PC-9 (cell line): ENCODE measurements at regions of chr7 and their contacts with region 1.

Region 1: DNA sequence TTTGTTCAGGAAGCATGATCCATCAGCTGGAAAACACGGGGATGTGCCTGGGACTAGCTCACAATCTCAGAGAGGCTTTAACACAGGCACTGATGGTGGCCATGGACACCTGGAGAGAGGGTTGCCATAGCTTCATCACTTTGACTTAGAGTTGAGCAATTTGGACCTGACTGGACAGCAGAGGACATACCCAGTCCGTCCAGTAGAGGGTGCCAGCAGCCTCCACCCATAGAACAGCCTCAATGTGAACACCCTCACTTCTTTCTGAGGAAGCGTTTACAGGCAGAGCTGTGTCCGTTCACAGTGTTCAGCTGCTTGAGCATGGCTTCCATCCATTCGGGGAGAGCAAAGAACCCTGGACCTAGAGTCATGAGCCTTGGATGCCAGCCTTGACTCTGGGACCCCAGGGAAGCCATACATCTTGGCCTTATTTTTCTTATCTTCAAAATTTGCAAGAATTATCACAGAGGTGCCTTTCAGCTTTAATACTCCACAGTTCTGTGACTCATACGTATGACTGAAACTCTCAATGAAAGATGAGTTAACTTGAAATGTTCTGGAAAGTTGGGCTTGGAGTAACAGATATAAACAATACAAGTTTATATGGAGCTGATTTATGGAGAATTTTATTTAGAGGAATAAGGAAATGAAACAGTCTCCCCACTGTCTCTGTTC is 302.9 kb upstream of the PODXL start:
- DNase-seq: peak; percentile 34 to 64
- H3K4me3 ChIP-seq: no peak overlapping the region
- H3K27ac ChIP-seq: no peak overlapping the region
- H3K4me1 ChIP-seq: no peaks in the 10 kb centered on the region
- H3K27me3 ChIP-seq: peaks cover 45% of the 10 kb centered on the region
- CTCF ChIP-seq: peak; percentile 91

Region 2: GRCh38 chr7:131688738-131689661 is 170.3 kb before region 1 on chr7:
- CTCF ChIA-PET with region 1: no interaction called
- POLR2A ChIA-PET with region 1: no interaction called
- intact Hi-C with region 1: loop called (anchors 10 kb)
- DNase-seq: peak; percentile 43 to 70
- H3K4me3 ChIP-seq: no peak overlapping the region
- H3K27ac ChIP-seq: no peak overlapping the region
- H3K4me1 ChIP-seq: no peaks in the 10 kb centered on the region
- H3K27me3 ChIP-seq: peaks cover 95% of the 10 kb centered on the region
- CTCF ChIP-seq: peak; percentile 98

Region 3: GRCh38 chr7:132154248-132154647 is 295.0 kb after region 1 on chr7:
- CTCF ChIA-PET with region 1: no interaction called
- POLR2A ChIA-PET with region 1: no interaction called
- intact Hi-C with region 1: loop called (anchors 2 kb)
- DNase-seq: peak in 1 of 2 experiments; percentile 15
- H3K4me3 ChIP-seq: no peak overlapping the region
- H3K27ac ChIP-seq: no peak overlapping the region
- H3K4me1 ChIP-seq: no peaks in the 10 kb centered on the region
- H3K27me3 ChIP-seq: peaks cover 41% of the 10 kb centered on the region
- CTCF ChIP-seq: peak; percentile 62

Region 4: DNA sequence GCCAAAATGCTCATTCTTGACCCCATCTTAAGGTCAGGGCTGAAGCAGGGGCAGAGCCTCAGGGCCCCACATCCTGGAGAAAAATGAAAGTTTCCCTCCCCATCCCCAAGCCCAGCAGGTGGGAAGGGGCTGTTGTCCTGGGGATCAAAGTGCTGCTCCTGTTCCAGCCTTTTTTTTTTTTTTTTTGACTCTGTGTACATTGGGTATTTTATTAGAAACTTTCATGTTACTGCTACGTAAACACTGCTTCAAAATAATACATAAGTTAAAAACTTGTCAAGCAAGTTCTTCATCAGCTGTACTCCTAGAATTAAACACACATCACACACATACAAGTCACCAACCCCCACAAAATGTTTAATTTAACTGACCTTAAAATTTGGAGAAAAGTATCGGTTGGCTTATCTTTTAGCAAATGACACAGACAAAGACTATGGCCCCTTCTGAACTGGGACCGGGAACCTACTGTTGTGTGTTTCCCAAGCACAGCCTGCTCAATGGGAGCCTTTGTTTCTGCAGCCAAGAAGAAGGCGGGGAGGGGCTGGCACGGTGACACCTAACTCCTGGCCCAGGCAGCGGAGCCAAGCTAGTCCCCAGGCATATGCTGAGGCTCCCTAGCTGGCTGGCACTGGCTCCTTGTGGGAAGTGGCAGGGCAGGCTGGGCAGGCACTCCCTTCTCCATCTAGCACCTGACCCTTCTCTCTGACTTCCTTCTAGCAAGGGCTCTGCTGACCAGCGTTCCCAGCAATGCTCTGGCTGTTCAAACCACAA is 391.8 kb after region 1 on chr7:
- CTCF ChIA-PET with region 1: no interaction called
- POLR2A ChIA-PET with region 1: no interaction called
- intact Hi-C with region 1: loop called (anchors 10 kb)
- DNase-seq: peak; percentile 59 to 76
- H3K4me3 ChIP-seq: no peak overlapping the region
- H3K27ac ChIP-seq: no peak overlapping the region
- H3K4me1 ChIP-seq: no peaks in the 10 kb centered on the region
- H3K27me3 ChIP-seq: peaks cover 70% of the 10 kb centered on the region
- CTCF ChIP-seq: no peak

Region 5: GRCh38 chr7:132318352-132319318 is 459.4 kb after region 1 on chr7:
- CTCF ChIA-PET with region 1: no interaction called
- POLR2A ChIA-PET with region 1: no interaction called
- intact Hi-C with region 1: loop called (anchors 5 kb)
- DNase-seq: peak; percentile 61 to 72
- H3K4me3 ChIP-seq: no peak overlapping the region
- H3K27ac ChIP-seq: no peak overlapping the region
- H3K4me1 ChIP-seq: no peaks in the 10 kb centered on the region
- H3K27me3 ChIP-seq: peaks cover 67% of the 10 kb centered on the region
- CTCF ChIP-seq: peak; percentile 92

Region 6: GRCh38 chr7:132580717-132581285 is 721.5 kb after region 1 on chr7:
- CTCF ChIA-PET with region 1: interaction called, 8 read pairs
- POLR2A ChIA-PET with region 1: no interaction called
- intact Hi-C with region 1: loop called (anchors 1 kb)
- DNase-seq: peak; percentile 47 to 52
- H3K4me3 ChIP-seq: no peak overlapping the region
- H3K27ac ChIP-seq: no peak overlapping the region
- H3K4me1 ChIP-seq: no peaks in the 10 kb centered on the region
- H3K27me3 ChIP-seq: peaks cover 44% of the 10 kb centered on the region; the same call in 1 of the 2 replicates
- CTCF ChIP-seq: peak; percentile 86